H1 (cell line): ENCODE measurements at regions of chr3 and their contacts with region 1.

Region 1: DNA sequence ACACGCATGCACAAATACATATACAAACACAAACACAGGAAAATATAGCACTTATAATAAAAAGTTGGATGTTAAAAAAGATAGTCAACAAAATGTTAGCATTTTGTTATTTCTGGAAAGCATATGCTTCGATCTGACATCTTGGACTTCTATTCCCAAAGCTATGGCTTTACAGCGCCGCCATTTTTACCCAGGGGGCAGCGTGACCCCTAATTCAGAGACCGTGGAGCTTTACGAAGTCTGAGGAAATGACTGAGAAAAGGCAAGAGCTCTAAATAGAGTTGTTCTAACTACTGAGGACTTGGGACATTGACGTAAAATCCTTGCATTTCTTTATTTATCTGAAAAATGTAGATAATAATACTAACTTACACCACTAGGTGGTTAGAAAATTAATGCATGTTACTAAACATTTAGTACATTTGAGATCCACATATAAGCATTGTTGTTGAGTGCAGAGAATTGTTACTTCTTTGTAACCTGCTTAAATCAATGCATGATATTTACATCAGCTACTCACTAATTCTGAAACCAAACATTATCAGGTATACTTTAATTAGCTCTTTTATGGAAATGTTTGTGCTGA is 155.4 kb downstream of the TP63 start:
- DNase-seq: no peak
- H3K4me3 ChIP-seq: no peak overlapping the region
- H3K27ac ChIP-seq: no peak overlapping the region
- H3K4me1 ChIP-seq: no peaks in the 10 kb centered on the region; a peak in 1 of 7 replicates
- H3K27me3 ChIP-seq: peaks cover 0 to 2% (median 0%) of the 10 kb centered on the region in 4 experiments; a peak in 1 of 7 replicates
- CTCF ChIP-seq: peak; percentile 23 to 34 (median 26); a peak in 3 of 4 replicates
- EP300 ChIP-seq: no peak
- POLR2A ChIP-seq: no peak
- RAD21 ChIP-seq: peak; percentile 45 to 62

Region 2: DNA sequence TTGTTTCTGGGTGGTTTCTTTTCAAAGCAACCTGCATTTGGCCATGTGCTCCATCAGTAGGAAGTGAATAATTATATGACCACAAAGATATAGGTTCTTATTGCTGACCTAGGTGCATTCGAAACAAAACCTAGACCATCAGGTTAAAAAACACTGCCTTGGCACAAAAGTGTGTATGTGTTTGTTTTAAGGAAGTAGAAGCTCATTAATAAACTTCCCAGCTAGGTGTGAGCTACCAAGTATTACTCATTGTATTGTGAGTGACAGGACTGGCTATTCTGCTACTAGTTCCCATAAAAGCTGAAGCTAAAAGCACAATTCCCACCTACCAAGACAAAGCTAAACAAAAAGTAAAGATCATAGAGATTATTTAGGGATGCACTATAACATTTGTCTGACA is 12.8 kb after region 1 on chr3:
- CTCF ChIA-PET with region 1: interaction called, 13 read pairs
- POLR2A ChIA-PET with region 1: no interaction called
- DNase-seq: no peak
- H3K4me3 ChIP-seq: no peak overlapping the region
- H3K27ac ChIP-seq: no peak overlapping the region
- H3K4me1 ChIP-seq: no peaks in the 10 kb centered on the region
- H3K27me3 ChIP-seq: peaks cover 1 to 20% (median 7%) of the 10 kb centered on the region in 4 experiments
- CTCF ChIP-seq: no peak
- EP300 ChIP-seq: no peak
- POLR2A ChIP-seq: no peak
- RAD21 ChIP-seq: no peak